RWPE1 (cell line): ENCODE measurements at regions of chr19 and their contacts with region 1.

Region 1: DNA sequence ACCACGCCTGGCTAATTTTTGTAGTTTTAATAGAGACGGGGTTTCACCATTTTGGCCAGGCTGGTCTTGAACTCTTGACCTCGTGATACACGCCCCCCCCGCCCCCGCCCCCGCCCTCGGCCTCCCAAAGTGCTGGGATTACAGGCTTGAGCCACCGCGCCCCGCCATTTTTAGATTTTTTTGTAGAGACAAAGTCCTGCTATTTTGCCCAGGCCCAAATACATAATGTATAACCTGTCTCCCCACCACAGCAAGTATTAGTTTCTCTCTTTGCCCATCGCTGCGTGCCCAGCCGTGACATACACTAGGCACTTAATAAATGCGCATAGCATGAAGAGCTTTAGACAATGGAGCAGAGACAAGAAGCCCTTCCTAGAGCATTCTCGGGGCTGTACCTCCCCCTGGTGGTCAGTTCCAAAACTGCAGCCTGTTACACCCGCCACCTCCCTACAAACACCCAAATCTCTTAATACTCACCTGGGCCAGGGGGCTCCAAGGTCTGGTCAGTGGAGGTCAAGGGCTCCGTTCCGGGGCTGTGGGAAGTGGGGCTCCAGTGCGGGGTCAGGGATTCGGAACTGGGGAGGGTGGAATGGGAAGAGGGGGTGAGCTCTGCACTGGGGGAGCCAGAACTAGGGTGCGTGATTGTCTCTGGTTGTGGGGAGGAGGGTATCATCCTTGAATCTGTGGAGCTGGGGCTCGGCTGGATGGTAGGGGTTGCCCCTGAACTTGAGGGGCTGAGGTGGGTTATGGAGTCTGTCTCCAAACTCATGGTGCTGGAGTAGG is 22.5 kb downstream of the IQCN start:
- DNase-seq: peak; percentile 84
- H3K27ac ChIP-seq: no peak overlapping the region
- CTCF ChIP-seq: peak; percentile 94

Region 2: GRCh38 chr19:18109733-18110595 is 141.8 kb before region 1 on chr19:
- CTCF ChIA-PET with region 1: interaction called, 11 read pairs
- POLR2A ChIA-PET with region 1: no interaction called
- DNase-seq: no peak
- H3K27ac ChIP-seq: peak overlapping the region; percentile 63
- CTCF ChIP-seq: no peak

Region 3: GRCh38 chr19:18203863-18204393 is 47.9 kb before region 1 on chr19 and contains the start of gene RAB3A:
- CTCF ChIA-PET with region 1: interaction called, 16 read pairs
- POLR2A ChIA-PET with region 1: no interaction called
- DNase-seq: peak; percentile 99
- H3K27ac ChIP-seq: peak within 1 kb of the TSS; percentile 92
- CTCF ChIP-seq: no peak

Region 4: GRCh38 chr19:18233224-18233825 is 18.5 kb before region 1 on chr19:
- CTCF ChIA-PET with region 1: interaction called, 12 read pairs
- POLR2A ChIA-PET with region 1: no interaction called
- DNase-seq: peak; percentile 74
- H3K27ac ChIP-seq: no peak overlapping the region
- CTCF ChIP-seq: no peak

Region 5: DNA sequence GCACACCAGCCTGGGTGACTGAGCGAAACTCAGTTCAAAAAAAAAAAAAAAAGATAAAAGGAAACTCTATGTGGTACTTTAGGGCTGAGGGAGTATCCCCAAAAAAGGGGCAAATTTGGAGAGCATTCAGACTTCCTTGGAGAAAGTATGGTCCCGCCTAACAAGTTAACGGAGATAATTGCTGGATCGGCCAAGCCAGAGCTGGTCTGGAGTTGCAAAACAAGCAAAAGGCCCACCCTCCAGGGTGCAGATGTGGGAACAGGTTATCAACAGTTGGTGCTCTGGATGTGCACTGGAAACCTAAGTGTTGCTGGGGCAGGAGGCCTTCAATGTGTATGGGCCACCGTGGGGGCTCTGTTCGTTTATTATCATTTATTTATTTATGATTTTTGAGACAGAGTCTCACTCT is 19.7 kb after region 1 on chr19:
- CTCF ChIA-PET with region 1: interaction called, 21 read pairs
- POLR2A ChIA-PET with region 1: no interaction called
- DNase-seq: no peak
- H3K27ac ChIP-seq: peak overlapping the region; percentile 99
- CTCF ChIP-seq: no peak

Region 6: GRCh38 chr19:18281082-18282020 is 29.6 kb after region 1 on chr19 and contains the start of gene JUND:
- CTCF ChIA-PET with region 1: interaction called, 16 read pairs
- POLR2A ChIA-PET with region 1: no interaction called
- DNase-seq: peak; percentile 96
- H3K27ac ChIP-seq: peak within 1 kb of the TSS; percentile 99
- CTCF ChIP-seq: no peak